ENCODE measurements at regions of chr1 and their contacts with region 1.

Region 1: GRCh38 chr1:26677306-26678115 is 18.3 kb upstream of the ARID1A start:
- DNase-seq: no peak
- H3K4me3 ChIP-seq: no peak overlapping the region
- H3K27me3 ChIP-seq: no peaks in the 10 kb centered on the region
- CTCF ChIP-seq: peak; percentile 54

Region 2: GRCh38 chr1:26602378-26602959 is 75.0 kb before region 1 on chr1:
- CTCF ChIA-PET with region 1: interaction called, 14 read pairs
- POLR2A ChIA-PET with region 1: no interaction called
- DNase-seq: no peak
- H3K4me3 ChIP-seq: no peak overlapping the region
- H3K27me3 ChIP-seq: peaks cover 2% of the 10 kb centered on the region; the same call in 1 of the 2 replicates
- CTCF ChIP-seq: peak; percentile 73

Measured in BJ (cell line).